PC-3 (cell line): ENCODE measurements at regions of chrX and their contacts with region 1.

Region 1: GRCh38 chrX:47456080-47456479 is 26.9 kb downstream of the ZNF41 start:
- DNase-seq: no peak
- ATAC-seq: no peak
- H3K4me3 ChIP-seq: no peak overlapping the region
- H3K27ac ChIP-seq: no peak overlapping the region
- H3K4me1 ChIP-seq: no peaks in the 10 kb centered on the region
- H3K27me3 ChIP-seq: no peaks in the 10 kb centered on the region
- CTCF ChIP-seq: no peak

Region 2: GRCh38 chrX:47358387-47359065 is 97.6 kb before region 1 on chrX:
- CTCF ChIA-PET with region 1: no interaction called
- POLR2A ChIA-PET with region 1: no interaction called
- intact Hi-C with region 1: no loop called
- DNase-seq: peak; percentile 2
- ATAC-seq: no peak
- H3K4me3 ChIP-seq: no peak overlapping the region
- H3K27ac ChIP-seq: no peak overlapping the region
- H3K4me1 ChIP-seq: no peaks in the 10 kb centered on the region
- H3K27me3 ChIP-seq: no peaks in the 10 kb centered on the region
- CTCF ChIP-seq: no peak

Region 3: GRCh38 chrX:47430925-47431324 is 25.2 kb before region 1 on chrX:
- CTCF ChIA-PET with region 1: no interaction called
- POLR2A ChIA-PET with region 1: interaction called, 24 read pairs
- intact Hi-C with region 1: no loop called
- DNase-seq: no peak
- ATAC-seq: no peak
- H3K4me3 ChIP-seq: no peak overlapping the region
- H3K27ac ChIP-seq: no peak overlapping the region
- H3K4me1 ChIP-seq: no peaks in the 10 kb centered on the region
- H3K27me3 ChIP-seq: no peaks in the 10 kb centered on the region
- CTCF ChIP-seq: no peak